Psoas muscle (tissue), 8 donors: ENCODE measurements at regions of chr1 and their contacts with region 1.

Region 1: DNA sequence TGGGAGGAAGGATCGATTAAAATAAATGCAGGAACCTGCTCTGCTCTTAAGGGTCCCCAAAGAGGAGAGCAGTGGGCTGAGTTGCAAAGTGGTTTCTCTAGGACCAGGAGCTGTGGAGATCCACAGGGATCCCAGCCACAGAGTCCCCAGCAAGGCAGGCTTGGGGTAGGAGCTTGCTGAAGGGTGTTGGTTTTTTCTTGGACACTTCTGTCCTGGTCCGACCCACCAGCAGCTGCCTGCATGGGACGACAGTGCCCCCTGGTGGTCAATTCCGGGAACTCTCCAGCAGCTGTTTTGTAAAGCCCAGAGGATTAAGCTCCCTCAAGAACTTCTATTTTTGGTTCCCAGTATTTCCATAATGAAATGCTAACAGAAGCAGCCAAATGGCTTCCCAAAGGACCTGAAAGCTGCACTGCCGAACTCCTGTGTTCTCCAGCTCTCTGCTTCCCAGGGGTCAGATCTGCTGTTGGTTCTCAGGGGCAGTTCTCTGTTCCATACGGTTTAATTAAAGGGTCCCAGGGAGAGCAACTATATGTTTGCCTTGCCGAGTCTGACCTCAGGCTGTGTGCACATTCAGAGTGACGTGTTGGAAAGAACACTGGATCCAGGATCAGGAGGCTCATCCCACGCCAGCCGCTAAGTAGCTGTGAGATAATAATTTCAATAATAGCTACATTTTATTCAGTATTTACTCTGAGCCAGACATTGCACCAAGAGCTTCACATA is 23.2 kb downstream of the NENF start:
- DNase-seq: peak; percentile 89 to 93
- ATAC-seq: peak; percentile 87 to 96 (median 92)
- H3K4me3 ChIP-seq: peak overlapping the region; percentile 54
- H3K27ac ChIP-seq: peak overlapping the region; percentile 73
- H3K4me1 ChIP-seq: peaks cover 11% of the 10 kb centered on the region
- H3K27me3 ChIP-seq: no peaks in the 10 kb centered on the region
- CTCF ChIP-seq: peak; percentile 99

Region 2: DNA sequence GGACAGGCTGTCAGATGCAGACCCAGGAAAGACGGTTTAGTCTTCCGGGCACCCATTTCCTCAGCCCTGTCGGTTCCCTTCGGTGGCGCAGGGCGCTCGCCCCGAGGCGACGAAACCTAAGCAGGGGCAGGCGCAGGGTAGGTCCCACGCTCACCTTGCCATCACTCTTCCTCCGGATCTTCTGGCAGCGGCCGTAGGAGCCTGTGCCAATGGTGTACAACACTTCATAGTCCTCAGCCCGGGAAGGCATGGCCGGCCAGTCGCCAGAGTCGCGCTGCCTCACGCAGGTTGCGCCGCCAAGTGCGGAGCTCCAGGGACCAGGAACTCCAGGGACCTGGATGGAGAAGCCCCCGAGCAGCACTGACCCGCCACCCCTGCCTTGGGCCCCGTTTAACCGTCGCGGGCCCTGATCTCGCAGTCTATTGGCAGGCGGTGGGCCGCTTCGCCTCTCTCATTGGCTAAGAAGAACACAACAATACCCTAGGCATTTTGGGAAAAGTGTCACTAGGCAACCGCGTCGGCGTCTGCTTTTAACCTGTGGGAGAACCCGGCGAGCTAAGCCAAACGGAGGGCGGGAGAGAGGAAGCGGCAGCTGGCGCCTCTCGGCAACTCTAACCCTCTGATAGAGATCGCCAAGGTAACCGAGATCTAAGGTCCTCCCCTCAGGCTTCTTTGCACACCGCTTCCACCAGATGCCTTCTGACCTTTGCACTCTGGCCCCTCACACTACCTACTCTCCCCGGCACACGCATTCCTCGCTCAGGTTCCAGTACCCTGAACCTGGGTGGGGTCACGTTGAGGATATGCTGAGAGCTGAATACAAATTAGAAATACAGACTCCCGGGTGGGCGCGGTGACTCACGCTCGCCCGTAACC is 780.5 kb before region 1 on chr1 and contains the start of gene NEK2:
- intact Hi-C with region 1: loop called in 1 of 2 experiments (anchors 5 kb)
- DNase-seq: peak; percentile 80 to 88
- ATAC-seq: peak; percentile 91 to 99 (median 96)
- H3K4me3 ChIP-seq: peak within 1 kb of the TSS; percentile 73
- H3K27ac ChIP-seq: no peak within 1 kb of the TSS
- H3K4me1 ChIP-seq: peaks cover 6% of the 10 kb centered on the region
- H3K27me3 ChIP-seq: peaks cover 0 to 11% (median 0%) of the 10 kb centered on the region in 3 donors
- CTCF ChIP-seq: no peak
- total RNA-seq, gene NEK2: not detected

Region 3: GRCh38 chr1:212062832-212063438 is 393.0 kb before region 1 on chr1:
- intact Hi-C with region 1: loop called in 1 of 2 experiments (anchors 5 kb)
- DNase-seq: no peak
- ATAC-seq: peak; percentile 53 to 82 (median 64)
- H3K4me3 ChIP-seq: no peak overlapping the region
- H3K27ac ChIP-seq: no peak overlapping the region
- H3K4me1 ChIP-seq: peaks cover 2% of the 10 kb centered on the region
- H3K27me3 ChIP-seq: no peaks in the 10 kb centered on the region
- CTCF ChIP-seq: peak; percentile 60

Region 4: DNA sequence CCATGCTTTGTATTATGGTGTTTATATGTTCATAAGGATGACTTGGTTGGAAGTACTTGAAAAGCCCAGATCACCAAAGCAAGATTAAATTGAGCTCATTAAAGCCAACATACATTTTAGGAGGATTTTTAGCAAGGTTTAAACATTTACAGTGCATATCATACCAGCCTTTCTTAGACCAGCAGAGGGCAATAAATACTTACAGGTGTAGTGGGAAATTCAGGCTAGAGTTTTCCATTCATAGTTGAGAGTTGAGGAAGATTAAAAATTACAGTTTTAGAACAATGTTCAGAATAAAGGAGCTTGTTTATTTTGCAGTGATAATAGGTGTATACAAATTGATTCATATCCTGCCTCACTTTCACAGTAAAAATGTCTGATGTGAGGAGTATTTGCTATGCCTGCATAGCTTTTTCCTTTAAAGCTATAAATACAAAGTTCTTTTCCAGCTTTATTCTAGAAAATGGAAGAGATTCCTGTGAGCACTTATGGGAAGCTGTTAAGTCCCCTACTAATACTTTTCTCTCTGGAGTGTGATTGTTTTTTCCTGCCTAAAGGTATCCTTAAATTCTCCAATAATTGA is 385.2 kb before region 1 on chr1:
- intact Hi-C with region 1: loop called in 1 of 2 experiments (anchors 5 kb)
- DNase-seq: no peak
- ATAC-seq: peak; percentile 50 to 57 (median 53)
- H3K4me3 ChIP-seq: no peak overlapping the region
- H3K27ac ChIP-seq: no peak overlapping the region
- H3K4me1 ChIP-seq: peaks cover 2% of the 10 kb centered on the region
- H3K27me3 ChIP-seq: no peaks in the 10 kb centered on the region
- CTCF ChIP-seq: peak; percentile 81

Region 5: GRCh38 chr1:212291505-212292134 is 164.3 kb before region 1 on chr1:
- intact Hi-C with region 1: loop called in 1 of 2 experiments (anchors 2 kb)
- DNase-seq: no peak
- ATAC-seq: peak in 3 of 4 donors; percentile 56 to 62 (median 59)
- H3K4me3 ChIP-seq: peak overlapping the region; percentile 20
- H3K27ac ChIP-seq: peak overlapping the region; percentile 11
- H3K4me1 ChIP-seq: peaks cover 79% of the 10 kb centered on the region
- H3K27me3 ChIP-seq: no peaks in the 10 kb centered on the region
- CTCF ChIP-seq: peak; percentile 67

Region 6: GRCh38 chr1:212315907-212316306 is 140.1 kb before region 1 on chr1:
- intact Hi-C with region 1: loop called in 1 of 2 experiments (anchors 10 kb)
- DNase-seq: no peak
- ATAC-seq: peak in 3 of 4 donors; percentile 49 to 63 (median 52)
- H3K4me3 ChIP-seq: no peak overlapping the region
- H3K27ac ChIP-seq: no peak overlapping the region
- H3K4me1 ChIP-seq: peaks cover 56% of the 10 kb centered on the region
- H3K27me3 ChIP-seq: no peaks in the 10 kb centered on the region
- CTCF ChIP-seq: peak; percentile 26

Region 7: GRCh38 chr1:212368073-212368484 is 87.9 kb before region 1 on chr1:
- intact Hi-C with region 1: loop called (anchors 5 kb)
- DNase-seq: no peak
- ATAC-seq: peak; percentile 83 to 92 (median 84)
- H3K4me3 ChIP-seq: no peak overlapping the region
- H3K27ac ChIP-seq: no peak overlapping the region
- H3K4me1 ChIP-seq: peaks cover 7% of the 10 kb centered on the region
- H3K27me3 ChIP-seq: no peaks in the 10 kb centered on the region
- CTCF ChIP-seq: peak; percentile 74